Head of caudate nucleus (tissue), 42 donors: ENCODE measurements at regions of chr2 and their contacts with region 1.

Region 1: DNA sequence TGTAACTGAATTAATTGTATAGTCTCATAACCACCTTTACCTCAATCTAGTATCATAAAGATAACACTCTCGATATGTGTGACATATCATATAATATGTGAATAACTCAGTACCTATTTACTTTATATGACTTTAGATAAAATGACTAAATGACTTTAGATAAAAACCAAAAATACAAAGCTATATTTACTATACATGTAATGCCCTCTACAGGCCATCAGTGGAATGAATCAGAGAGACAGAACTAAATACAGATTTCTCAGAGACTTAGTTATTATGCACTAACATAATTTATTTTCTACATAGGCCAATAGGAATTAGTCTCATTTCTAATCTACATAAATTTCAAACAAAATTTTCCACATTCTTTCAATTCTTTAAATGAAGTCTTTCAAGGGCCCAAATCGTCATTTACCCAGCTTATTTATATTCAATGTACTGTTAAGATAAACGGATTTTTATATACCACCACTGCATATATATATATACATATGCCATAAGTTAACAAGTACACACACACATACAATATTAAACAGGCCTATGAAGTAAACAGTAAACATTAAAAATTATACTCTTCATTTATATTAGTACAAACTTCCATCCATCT is 219.9 kb downstream of the EXOC6B start:
- DNase-seq: no peak

Region 2: GRCh38 chr2:72745679-72746368 is 139.9 kb after region 1 on chr2:
- intact Hi-C with region 1: loop called (anchors 10 kb)
- DNase-seq: peak in 7 of 42 donors; percentile 11 to 51 (median 32)